Posterior vena cava (tissue), 2 donors: ENCODE measurements at regions of chr4 and their contacts with region 1.

Region 1: DNA sequence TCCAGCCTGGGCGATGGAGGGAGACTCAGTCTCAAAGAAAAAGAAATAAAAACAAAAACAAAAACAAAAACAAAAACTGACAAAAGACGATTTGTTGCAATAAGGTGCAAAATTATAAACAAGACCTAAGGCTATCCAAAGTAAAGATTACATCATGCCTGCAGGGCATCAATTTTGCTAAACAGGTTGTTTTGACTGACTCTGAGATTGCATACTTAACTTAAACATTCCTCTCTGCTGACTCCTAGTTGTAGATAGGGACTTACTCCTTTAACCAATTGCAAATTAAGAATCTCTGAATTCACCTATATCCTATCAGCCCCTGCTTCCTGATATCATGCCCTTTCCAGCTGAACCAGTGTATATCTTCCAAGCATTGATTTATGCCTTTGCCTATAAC is 2687.3 kb downstream of the PCDH7 start:
- DNase-seq: no peak

Region 2: GRCh38 chr4:32672359-32672758 is 735.1 kb before region 1 on chr4:
- intact Hi-C with region 1: loop called in 1 of 2 experiments (anchors 5 kb)
- DNase-seq: no peak

Region 3: GRCh38 chr4:33561259-33561658 is 153.8 kb after region 1 on chr4:
- intact Hi-C with region 1: no loop called
- DNase-seq: no peak